AG04450 (cell line): ENCODE measurements at regions of chr14 and their contacts with region 1.

Region 1: GRCh38 chr14:22900081-22900799 is 17.2 kb downstream of the REM2 start:
- DNase-seq: peak; percentile 53
- H3K4me3 ChIP-seq: no peak overlapping the region
- H3K27ac ChIP-seq: no peak overlapping the region
- H3K27me3 ChIP-seq: no peaks in the 10 kb centered on the region
- CTCF ChIP-seq: peak; percentile 66

Region 2: GRCh38 chr14:22386924-22387775 is 513.1 kb before region 1 on chr14:
- CTCF ChIA-PET with region 1: interaction called, 12 read pairs
- POLR2A ChIA-PET with region 1: no interaction called
- DNase-seq: peak; percentile 47
- H3K4me3 ChIP-seq: no peak overlapping the region
- H3K27ac ChIP-seq: no peak overlapping the region
- H3K27me3 ChIP-seq: peaks cover 5% of the 10 kb centered on the region
- CTCF ChIP-seq: peak; percentile 74

Region 3: GRCh38 chr14:22829661-22830442 is 70.4 kb before region 1 on chr14 and contains the start of gene MRPL52:
- CTCF ChIA-PET with region 1: interaction called, 56 read pairs
- POLR2A ChIA-PET with region 1: no interaction called
- DNase-seq: peak; percentile 67
- H3K4me3 ChIP-seq: peak within 1 kb of the TSS; percentile 86
- H3K27ac ChIP-seq: peak within 1 kb of the TSS; percentile 52
- H3K27me3 ChIP-seq: no peaks in the 10 kb centered on the region
- CTCF ChIP-seq: peak; percentile 8; the same call in 1 of the 2 replicates
- polyA plus RNA-seq, gene MRPL52: 71.8 and 78.1 TPM in 2 replicates

Region 4: GRCh38 chr14:22872033-22872832 is 28.0 kb before region 1 on chr14:
- CTCF ChIA-PET with region 1: interaction called, 89 read pairs
- POLR2A ChIA-PET with region 1: no interaction called
- DNase-seq: peak; percentile 58
- H3K4me3 ChIP-seq: peak overlapping the region; percentile 80
- H3K27ac ChIP-seq: peak overlapping the region; percentile 91
- H3K27me3 ChIP-seq: no peaks in the 10 kb centered on the region
- CTCF ChIP-seq: peak; percentile 96

Region 5: DNA sequence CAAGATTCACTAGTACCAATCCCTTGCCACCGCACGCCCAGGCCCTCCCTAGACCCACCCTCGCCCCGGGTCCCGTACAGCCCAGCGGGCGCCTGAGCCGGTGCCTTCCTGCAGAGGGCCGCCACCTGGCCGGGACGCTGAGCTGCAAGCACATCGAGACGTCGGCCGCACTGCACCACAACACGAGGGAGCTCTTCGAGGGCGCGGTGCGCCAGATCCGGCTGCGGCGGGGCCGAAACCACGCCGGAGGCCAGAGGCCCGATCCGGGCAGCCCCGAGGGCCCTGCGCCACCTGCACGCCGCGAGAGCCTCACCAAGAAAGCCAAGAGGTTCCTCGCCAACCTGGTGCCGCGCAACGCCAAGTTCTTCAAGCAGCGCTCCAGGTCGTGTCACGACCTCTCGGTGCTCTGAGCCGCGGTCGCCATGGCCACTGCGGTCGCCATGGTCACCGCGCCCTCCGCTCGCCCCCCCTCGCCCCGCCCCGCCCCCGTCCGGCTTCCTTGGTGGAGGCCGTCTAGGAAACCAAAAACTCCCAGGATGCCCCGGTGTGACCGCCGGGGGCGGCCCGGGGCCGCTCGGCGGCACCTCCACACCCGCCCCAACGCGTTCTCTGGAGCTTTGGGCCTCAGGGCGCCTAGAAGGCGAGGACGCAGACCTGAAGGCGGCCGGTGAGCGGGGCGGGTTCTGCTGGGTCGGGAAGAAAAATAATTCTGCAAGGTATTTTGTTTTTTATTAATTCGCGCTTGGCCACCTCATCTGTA is 13.6 kb before region 1 on chr14:
- CTCF ChIA-PET with region 1: interaction called, 17 read pairs
- POLR2A ChIA-PET with region 1: no interaction called
- DNase-seq: no peak
- H3K4me3 ChIP-seq: peak overlapping the region; percentile 63
- H3K27ac ChIP-seq: peak overlapping the region; percentile 65
- H3K27me3 ChIP-seq: no peaks in the 10 kb centered on the region
- CTCF ChIP-seq: no peak

Region 6: DNA sequence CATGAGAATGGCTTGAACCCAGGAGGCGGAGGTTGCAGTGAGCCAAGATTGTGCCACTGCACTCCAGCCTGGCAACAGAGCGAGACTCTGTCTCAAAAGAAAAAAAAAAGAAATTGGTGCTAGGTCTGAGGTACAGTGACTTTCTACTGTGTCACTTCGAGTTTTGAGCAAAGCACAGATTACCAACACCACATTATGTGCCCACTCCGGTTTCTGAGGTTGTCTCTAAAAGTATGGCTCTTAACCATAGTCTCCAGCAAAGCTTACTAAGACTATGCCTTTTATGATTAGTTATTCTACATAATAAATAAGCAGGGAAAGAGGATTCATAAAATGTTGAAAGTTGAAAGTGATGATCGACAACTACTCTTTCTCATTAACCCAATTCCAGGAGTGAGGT is 10.7 kb after region 1 on chr14:
- CTCF ChIA-PET with region 1: interaction called, 10 read pairs
- POLR2A ChIA-PET with region 1: interaction called, 5 read pairs
- DNase-seq: no peak
- H3K4me3 ChIP-seq: no peak overlapping the region
- H3K27ac ChIP-seq: no peak overlapping the region
- H3K27me3 ChIP-seq: no peaks in the 10 kb centered on the region
- CTCF ChIP-seq: no peak

Region 7: DNA sequence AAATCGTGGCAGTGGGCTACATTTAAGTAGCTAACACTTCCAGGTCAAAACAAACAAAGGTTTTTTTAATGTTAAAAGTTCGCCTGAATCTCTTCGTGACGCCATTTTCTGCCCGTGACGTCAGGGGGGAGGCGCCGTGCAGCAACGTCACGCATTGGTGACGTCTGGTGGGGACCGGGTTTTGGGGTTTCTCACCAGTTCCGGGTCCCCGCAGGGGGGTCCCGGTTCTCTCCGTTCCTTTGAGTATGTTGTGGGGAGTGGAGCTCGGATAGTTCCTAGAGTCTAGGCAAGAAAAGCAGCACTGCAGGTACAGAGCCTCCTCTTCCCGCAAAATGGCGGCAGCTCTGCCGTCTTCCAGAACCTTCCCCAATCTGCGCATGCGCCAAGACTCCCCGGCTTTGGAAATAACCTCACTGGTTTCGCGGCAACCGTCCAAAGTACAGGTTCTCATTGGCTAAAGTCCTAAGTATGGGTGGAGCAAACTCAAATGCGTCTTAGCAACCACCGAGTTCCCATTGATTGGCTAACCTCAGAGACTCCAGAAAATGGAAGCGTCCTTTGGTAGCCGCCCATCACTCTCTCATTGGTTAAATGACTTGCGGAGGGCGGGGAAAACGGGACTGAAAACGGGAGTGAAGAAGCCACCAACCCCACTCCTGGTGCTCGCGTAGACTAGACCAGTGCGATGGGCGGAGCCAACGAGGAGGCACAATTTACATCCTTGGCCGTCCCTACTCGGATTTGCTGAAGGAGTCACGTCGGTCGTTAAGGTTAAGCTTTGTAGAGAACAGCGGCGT is 18.8 kb after region 1 on chr14 and contains the start of gene RBM23:
- CTCF ChIA-PET with region 1: interaction called, 11 read pairs
- POLR2A ChIA-PET with region 1: no interaction called
- DNase-seq: peak; percentile 100
- H3K4me3 ChIP-seq: peak within 1 kb of the TSS; percentile 95
- H3K27ac ChIP-seq: peak within 1 kb of the TSS; percentile 99
- H3K27me3 ChIP-seq: no peaks in the 10 kb centered on the region
- CTCF ChIP-seq: no peak
- polyA plus RNA-seq, gene RBM23: 46.2 and 47.2 TPM in 2 replicates

Region 8: GRCh38 chr14:23025151-23025814 is 125.0 kb after region 1 on chr14:
- CTCF ChIA-PET with region 1: no interaction called
- POLR2A ChIA-PET with region 1: no interaction called
- DNase-seq: no peak
- H3K4me3 ChIP-seq: no peak overlapping the region
- H3K27ac ChIP-seq: no peak overlapping the region
- H3K27me3 ChIP-seq: no peaks in the 10 kb centered on the region
- CTCF ChIP-seq: no peak